Mammary epithelial cell (primary cell): ENCODE measurements at regions of chr11 and their contacts with region 1.

Region 1: GRCh38 chr11:6780829-6781228 is 2.0 kb upstream of the OR2AG1 start:
- DNase-seq: no peak
- H3K4me3 ChIP-seq: no peak overlapping the region
- H3K27ac ChIP-seq: no peak overlapping the region
- H3K4me1 ChIP-seq: no peaks in the 10 kb centered on the region
- H3K27me3 ChIP-seq: no peaks in the 10 kb centered on the region
- CTCF ChIP-seq: no peak

Region 2: GRCh38 chr11:6833356-6833755 is 52.5 kb after region 1 on chr11:
- CTCF ChIA-PET with region 1: no interaction called
- dilution Hi-C with region 1: loop called (anchors 5 kb)
- in situ Hi-C with region 1: no loop called
- intact Hi-C with region 1: no loop called
- DNase-seq: no peak
- H3K4me3 ChIP-seq: no peak overlapping the region
- H3K27ac ChIP-seq: no peak overlapping the region
- H3K4me1 ChIP-seq: no peaks in the 10 kb centered on the region
- H3K27me3 ChIP-seq: no peaks in the 10 kb centered on the region
- CTCF ChIP-seq: no peak

Region 3: GRCh38 chr11:7143908-7144307 is 363.1 kb after region 1 on chr11:
- CTCF ChIA-PET with region 1: no interaction called
- dilution Hi-C with region 1: no loop called
- in situ Hi-C with region 1: no loop called
- intact Hi-C with region 1: no loop called
- DNase-seq: peak; percentile 6
- H3K4me3 ChIP-seq: no peak overlapping the region
- H3K27ac ChIP-seq: no peak overlapping the region
- H3K4me1 ChIP-seq: no peaks in the 10 kb centered on the region
- H3K27me3 ChIP-seq: no peaks in the 10 kb centered on the region
- CTCF ChIP-seq: peak; percentile 43 to 51